ENCODE measurements at regions of chr16 and their contacts with region 1.

Region 1: DNA sequence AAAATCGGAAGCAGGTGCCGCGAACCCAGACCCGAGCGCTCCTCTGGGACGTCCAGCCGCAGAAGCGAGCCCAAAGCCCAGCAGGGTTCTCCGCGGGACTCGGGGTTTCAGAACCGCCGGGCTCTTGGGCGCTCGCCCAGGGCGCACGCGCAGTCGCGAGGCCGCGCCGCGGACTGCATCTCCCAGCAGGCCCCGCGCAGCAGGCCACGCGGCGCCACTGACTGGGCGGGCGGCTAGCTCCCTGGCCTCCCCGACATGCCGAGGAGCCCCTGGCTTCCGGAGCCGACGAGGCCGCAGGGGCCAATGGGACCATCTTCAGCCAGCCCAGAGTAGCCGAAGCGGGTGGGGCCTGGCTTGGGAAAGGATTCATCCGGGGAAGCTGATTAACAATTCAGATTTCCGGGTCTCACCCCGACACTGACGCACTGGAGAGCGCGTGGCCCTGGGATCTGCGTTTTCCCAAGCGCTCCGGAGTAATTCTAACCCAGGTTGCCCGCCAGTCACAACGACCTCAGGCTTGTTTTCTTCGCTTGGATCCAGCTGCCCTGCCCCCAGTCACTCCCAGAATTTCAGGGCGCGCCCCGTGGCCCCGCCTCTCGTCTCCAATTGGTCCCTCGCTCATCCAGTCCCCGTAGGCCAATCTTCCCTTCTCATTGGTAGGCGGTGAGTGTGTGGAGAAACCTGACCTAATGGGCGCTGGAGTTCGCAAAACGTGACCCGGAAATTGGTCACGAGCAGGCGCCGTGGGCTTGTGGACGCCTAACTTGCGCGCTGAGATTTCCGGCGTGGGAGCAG is at the start of gene ZNF263:
- DNase-seq: peak; percentile 89
- ATAC-seq: peak; percentile 87
- H3K4me3 Mint-ChIP-seq: peak within 1 kb of the TSS; percentile 95
- H3K27ac Mint-ChIP-seq: peak within 1 kb of the TSS; percentile 99
- H3K4me1 Mint-ChIP-seq: peaks cover 40% of the 10 kb centered on the region
- H3K27me3 Mint-ChIP-seq: no peaks in the 10 kb centered on the region
- CTCF ChIP-seq: no peak
- total RNA-seq, gene ZNF263: 42.7 and 42.9 TPM in 2 replicates

Region 2: GRCh38 chr16:3158471-3159314 is 124.2 kb before region 1 on chr16:
- CTCF ChIA-PET with region 1: no interaction called
- POLR2A ChIA-PET with region 1: interaction called, 4 read pairs
- intact Hi-C with region 1: loop called (anchors 5 kb)
- DNase-seq: peak; percentile 77
- ATAC-seq: peak; percentile 90
- H3K4me3 Mint-ChIP-seq: peak overlapping the region; percentile 91
- H3K27ac Mint-ChIP-seq: peak overlapping the region; percentile 90
- H3K4me1 Mint-ChIP-seq: peaks cover 23% of the 10 kb centered on the region
- H3K27me3 Mint-ChIP-seq: peaks cover 3% of the 10 kb centered on the region
- CTCF ChIP-seq: no peak

Region 3: DNA sequence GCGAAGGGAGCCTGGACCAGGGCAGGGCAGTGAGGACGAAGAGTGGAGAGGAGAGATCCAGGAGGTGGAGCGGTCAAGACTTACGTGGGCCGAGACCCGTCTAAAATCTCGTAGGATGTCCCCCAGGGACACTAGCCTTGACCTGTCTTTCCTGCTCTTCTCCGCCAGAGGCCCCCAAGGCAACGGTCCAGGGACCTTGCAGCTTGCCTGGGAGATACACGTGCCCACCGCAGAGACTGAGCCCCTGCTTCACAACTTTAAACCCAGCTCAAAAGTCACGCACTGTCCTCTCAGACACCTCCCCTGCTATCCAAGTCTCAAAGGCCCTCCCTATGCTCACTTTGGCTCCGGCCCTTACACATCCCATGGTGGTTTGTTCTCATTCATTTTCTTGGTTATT is 12.9 kb after region 1 on chr16:
- CTCF ChIA-PET with region 1: no interaction called
- POLR2A ChIA-PET with region 1: interaction called, 17 read pairs
- intact Hi-C with region 1: no loop called
- DNase-seq: no peak
- ATAC-seq: no peak
- H3K4me3 Mint-ChIP-seq: no peak overlapping the region
- H3K27ac Mint-ChIP-seq: no peak overlapping the region
- H3K4me1 Mint-ChIP-seq: peaks cover 6% of the 10 kb centered on the region
- H3K27me3 Mint-ChIP-seq: no peaks in the 10 kb centered on the region
- CTCF ChIP-seq: no peak

Region 4: DNA sequence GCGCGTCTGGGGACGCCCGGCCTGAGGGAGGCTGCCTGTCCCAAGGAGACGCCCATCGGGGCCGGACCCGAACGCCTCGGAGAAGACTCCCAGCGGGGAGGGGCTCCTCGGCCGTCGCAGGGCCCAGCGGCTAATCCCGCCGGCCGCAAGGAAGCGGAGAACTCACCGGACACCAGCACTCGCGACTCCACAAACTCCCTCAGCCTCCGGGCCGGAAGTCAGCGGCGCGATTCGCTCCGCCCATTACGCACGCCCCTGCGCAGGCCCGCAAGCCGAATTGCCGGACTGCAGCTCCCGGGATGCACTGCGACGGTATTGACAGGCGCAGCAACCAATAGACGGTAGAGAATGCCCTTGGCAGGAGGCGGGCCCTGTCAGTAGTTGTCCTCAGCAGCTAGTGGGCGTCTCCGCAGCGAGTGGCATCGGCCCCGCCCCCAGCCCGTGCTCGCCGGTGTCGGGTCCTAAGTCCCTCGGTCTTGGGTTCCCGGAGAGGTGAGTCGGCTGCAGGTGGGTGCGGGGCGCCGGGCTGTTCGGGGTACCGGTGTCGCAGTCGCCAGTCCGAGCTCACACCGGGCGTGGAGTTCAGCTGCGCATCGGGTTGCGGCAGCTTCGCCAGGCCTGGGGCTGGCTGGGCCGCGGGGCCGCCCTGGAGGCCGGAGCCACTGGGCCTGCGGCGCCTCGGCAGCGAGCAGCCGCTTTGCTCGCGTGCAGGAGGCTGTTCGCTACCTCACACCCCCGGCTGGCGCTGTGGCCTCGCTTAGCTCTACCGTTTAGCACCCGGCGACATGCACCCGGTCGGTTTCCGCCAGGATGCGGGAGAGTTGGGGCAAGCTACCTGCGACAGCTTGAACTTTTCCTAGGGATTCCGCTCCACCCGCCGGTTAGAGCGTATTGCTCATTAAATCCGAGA is 118.1 kb after region 1 on chr16 and contains the starts of genes ZNF174 and ZSCAN32:
- CTCF ChIA-PET with region 1: interaction called, 4 read pairs
- POLR2A ChIA-PET with region 1: interaction called, 30 read pairs
- intact Hi-C with region 1: loop called (anchors 1 kb)
- DNase-seq: peak; percentile 96
- ATAC-seq: peak; percentile 98
- H3K4me3 Mint-ChIP-seq: peak within 1 kb of the TSS; percentile 87
- H3K27ac Mint-ChIP-seq: peak within 1 kb of the TSS; percentile 76
- H3K4me1 Mint-ChIP-seq: peaks cover 45% of the 10 kb centered on the region
- H3K27me3 Mint-ChIP-seq: no peaks in the 10 kb centered on the region
- CTCF ChIP-seq: no peak
- total RNA-seq, gene ZNF174: 9.0 and 10.4 TPM in 2 replicates
- total RNA-seq, gene ZSCAN32: 21.6 and 21.7 TPM in 2 replicates

Region 5: GRCh38 chr16:3503523-3503922 is 220.6 kb after region 1 on chr16:
- CTCF ChIA-PET with region 1: no interaction called
- POLR2A ChIA-PET with region 1: interaction called, 7 read pairs
- intact Hi-C with region 1: loop called (anchors 1 kb)
- DNase-seq: no peak
- ATAC-seq: no peak
- H3K4me3 Mint-ChIP-seq: peak overlapping the region; percentile 15
- H3K27ac Mint-ChIP-seq: no peak overlapping the region
- H3K4me1 Mint-ChIP-seq: peaks cover 29% of the 10 kb centered on the region
- H3K27me3 Mint-ChIP-seq: no peaks in the 10 kb centered on the region
- CTCF ChIP-seq: no peak

Measured in activated B cell treated with CpG ODN at 0.5 μM for 24 hours (primary cell).